GM12878 (cell line): ENCODE measurements at regions of chr1 and their contacts with region 1.

Region 1: GRCh38 chr1:225911191-225912130 is 12.6 kb downstream of the PYCR2 start:
- DNase-seq: no peak
- ATAC-seq: peak; percentile 97
- H3K4me3 ChIP-seq: no peak overlapping the region
- H3K27ac ChIP-seq: no peak overlapping the region
- H3K4me1 ChIP-seq: peaks cover 4% of the 10 kb centered on the region; the same call in 1 of the 2 replicates
- H3K27me3 ChIP-seq: no peaks in the 10 kb centered on the region
- CTCF ChIP-seq: peak; percentile 78 to 81 (median 78)
- EP300 ChIP-seq: no peak
- POLR2A ChIP-seq: no peak
- RAD21 ChIP-seq: peak; percentile 81

Region 2: GRCh38 chr1:225772323-225772768 is 139.1 kb before region 1 on chr1:
- CTCF ChIA-PET with region 1: interaction called, 19 read pairs
- POLR2A ChIA-PET with region 1: no interaction called
- RAD21 ChIA-PET with region 1: interaction called, 39 read pairs
- SMC1A ChIA-PET with region 1: interaction called, 11 read pairs
- in situ Hi-C with region 1: loop called (anchors 5 kb)
- intact Hi-C with region 1: no loop called
- DNase-seq: no peak
- ATAC-seq: peak; percentile 89
- H3K4me3 ChIP-seq: no peak overlapping the region
- H3K27ac ChIP-seq: no peak overlapping the region
- H3K4me1 ChIP-seq: no peaks in the 10 kb centered on the region
- H3K27me3 ChIP-seq: no peaks in the 10 kb centered on the region
- CTCF ChIP-seq: peak; percentile 57 to 63 (median 62); a peak in 5 of 6 replicates
- EP300 ChIP-seq: no peak
- POLR2A ChIP-seq: no peak
- RAD21 ChIP-seq: peak; percentile 62

Region 3: GRCh38 chr1:225851805-225852204 is 59.7 kb before region 1 on chr1:
- CTCF ChIA-PET with region 1: interaction called, 4 read pairs
- POLR2A ChIA-PET with region 1: no interaction called
- RAD21 ChIA-PET with region 1: no interaction called
- SMC1A ChIA-PET with region 1: no interaction called
- in situ Hi-C with region 1: no loop called
- intact Hi-C with region 1: loop called (anchors 5 kb)
- DNase-seq: peak; percentile 76
- ATAC-seq: peak; percentile 83
- H3K4me3 ChIP-seq: no peak overlapping the region
- H3K27ac ChIP-seq: peak overlapping the region; percentile 72
- H3K4me1 ChIP-seq: peaks cover 58% of the 10 kb centered on the region
- H3K27me3 ChIP-seq: no peaks in the 10 kb centered on the region
- CTCF ChIP-seq: no peak
- EP300 ChIP-seq: peak; percentile 58 to 69
- POLR2A ChIP-seq: no peak
- RAD21 ChIP-seq: no peak

Region 4: GRCh38 chr1:225896937-225897549 is 14.4 kb before region 1 on chr1:
- CTCF ChIA-PET with region 1: interaction called, 4 read pairs
- POLR2A ChIA-PET with region 1: no interaction called
- RAD21 ChIA-PET with region 1: interaction called, 13 read pairs
- SMC1A ChIA-PET with region 1: interaction called, 3 read pairs
- in situ Hi-C with region 1: no loop called
- intact Hi-C with region 1: no loop called
- DNase-seq: peak; percentile 90
- ATAC-seq: peak; percentile 100
- H3K4me3 ChIP-seq: no peak overlapping the region
- H3K27ac ChIP-seq: peak overlapping the region; percentile 80
- H3K4me1 ChIP-seq: peaks cover 20% of the 10 kb centered on the region
- H3K27me3 ChIP-seq: no peaks in the 10 kb centered on the region
- CTCF ChIP-seq: peak in 1 of 3 experiments; percentile 11; a peak in 1 of 6 replicates
- EP300 ChIP-seq: peak; percentile 51 to 61; a peak in 3 of 4 replicates
- POLR2A ChIP-seq: peak; percentile 69
- RAD21 ChIP-seq: no peak

Region 5: DNA sequence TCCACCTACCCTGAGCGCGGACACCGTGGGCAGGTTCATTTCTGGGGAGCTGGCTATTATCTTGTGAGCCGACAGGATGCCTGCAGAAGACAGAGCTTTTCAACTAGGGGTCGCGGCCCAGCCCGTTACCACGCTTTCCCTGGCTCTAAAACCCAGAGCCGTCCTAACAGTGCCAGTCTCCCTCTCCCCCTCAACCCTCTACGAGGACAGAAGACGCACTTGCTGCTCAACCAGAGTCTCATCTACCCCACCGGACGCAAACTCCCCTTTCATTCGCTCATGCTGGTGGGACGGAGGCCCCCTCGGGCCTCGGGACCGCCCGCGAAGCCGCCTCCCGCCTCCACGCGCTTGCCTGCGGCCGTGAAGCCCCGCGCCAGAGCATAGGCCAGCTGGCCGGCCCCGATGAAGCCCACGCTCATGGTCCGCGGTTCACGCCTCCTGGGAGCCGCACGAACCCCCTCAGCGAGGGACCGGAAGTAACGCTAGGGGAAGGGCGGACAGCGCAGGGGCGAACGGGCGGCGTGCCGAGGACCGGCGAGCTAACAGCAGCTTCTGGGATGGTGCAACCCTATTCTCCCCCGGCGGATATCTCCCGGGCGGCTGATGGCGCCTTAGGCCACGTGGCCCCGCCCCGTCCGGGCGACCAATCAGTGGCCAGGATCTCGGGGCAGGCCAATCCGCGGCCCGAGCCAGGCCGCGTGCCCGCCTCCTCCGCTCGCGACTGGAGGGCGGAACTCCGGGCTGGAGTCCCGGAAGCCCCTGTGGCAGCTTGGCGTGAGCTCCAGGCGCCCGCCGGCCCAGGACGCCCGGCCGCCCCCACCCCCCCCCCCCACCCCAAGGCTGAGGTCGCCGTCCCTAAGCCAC is 12.5 kb after region 1 on chr1 and contains the start of gene PYCR2:
- CTCF ChIA-PET with region 1: interaction called, 10 read pairs
- POLR2A ChIA-PET with region 1: no interaction called
- RAD21 ChIA-PET with region 1: interaction called, 5 read pairs
- SMC1A ChIA-PET with region 1: no interaction called
- in situ Hi-C with region 1: no loop called
- intact Hi-C with region 1: no loop called
- DNase-seq: peak; percentile 79
- ATAC-seq: peak; percentile 98
- H3K4me3 ChIP-seq: peak within 1 kb of the TSS; percentile 94
- H3K27ac ChIP-seq: peak within 1 kb of the TSS; percentile 96
- H3K4me1 ChIP-seq: peaks cover 7% of the 10 kb centered on the region
- H3K27me3 ChIP-seq: no peaks in the 10 kb centered on the region
- CTCF ChIP-seq: no peak
- EP300 ChIP-seq: no peak
- POLR2A ChIP-seq: peak; percentile 96
- RAD21 ChIP-seq: no peak
- polyA plus RNA-seq, gene PYCR2: 1.7 to 5.9 TPM

Region 6: GRCh38 chr1:225942574-225942973 is 31.1 kb after region 1 on chr1:
- CTCF ChIA-PET with region 1: no interaction called
- POLR2A ChIA-PET with region 1: no interaction called
- RAD21 ChIA-PET with region 1: no interaction called
- SMC1A ChIA-PET with region 1: no interaction called
- in situ Hi-C with region 1: no loop called
- intact Hi-C with region 1: no loop called
- DNase-seq: peak; percentile 39
- ATAC-seq: peak; percentile 81
- H3K4me3 ChIP-seq: no peak overlapping the region
- H3K27ac ChIP-seq: no peak overlapping the region
- H3K4me1 ChIP-seq: peaks cover 24% of the 10 kb centered on the region
- H3K27me3 ChIP-seq: no peaks in the 10 kb centered on the region; a peak in 1 of 4 replicates
- CTCF ChIP-seq: no peak
- EP300 ChIP-seq: no peak
- POLR2A ChIP-seq: no peak
- RAD21 ChIP-seq: no peak

Region 7: DNA sequence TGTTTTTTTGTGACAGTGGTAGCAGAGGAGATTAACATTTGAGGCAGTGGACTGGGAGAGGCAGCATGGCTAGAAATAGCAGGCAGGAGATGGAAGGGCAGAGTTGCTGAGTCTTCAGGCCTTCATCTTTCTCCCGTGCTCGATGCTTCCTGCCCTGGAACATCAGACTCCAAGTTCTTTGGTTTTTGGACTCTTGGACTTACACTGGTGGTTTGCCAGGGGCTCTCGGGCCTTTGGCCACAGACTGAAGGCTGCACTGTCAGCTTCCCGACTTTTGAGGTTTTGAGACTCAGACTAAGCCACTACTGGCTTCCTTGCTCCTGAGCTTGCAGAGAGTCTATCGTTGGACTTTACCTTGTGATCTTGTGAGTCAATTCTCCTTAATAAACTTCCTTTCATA is 53.8 kb after region 1 on chr1:
- CTCF ChIA-PET with region 1: no interaction called
- POLR2A ChIA-PET with region 1: no interaction called
- RAD21 ChIA-PET with region 1: no interaction called
- SMC1A ChIA-PET with region 1: no interaction called
- in situ Hi-C with region 1: no loop called
- intact Hi-C with region 1: no loop called
- DNase-seq: no peak
- ATAC-seq: no peak
- H3K4me3 ChIP-seq: no peak overlapping the region
- H3K27ac ChIP-seq: no peak overlapping the region
- H3K4me1 ChIP-seq: no peaks in the 10 kb centered on the region
- H3K27me3 ChIP-seq: no peaks in the 10 kb centered on the region; a peak in 1 of 4 replicates
- CTCF ChIP-seq: no peak
- EP300 ChIP-seq: no peak
- POLR2A ChIP-seq: no peak
- RAD21 ChIP-seq: no peak

Region 8: DNA sequence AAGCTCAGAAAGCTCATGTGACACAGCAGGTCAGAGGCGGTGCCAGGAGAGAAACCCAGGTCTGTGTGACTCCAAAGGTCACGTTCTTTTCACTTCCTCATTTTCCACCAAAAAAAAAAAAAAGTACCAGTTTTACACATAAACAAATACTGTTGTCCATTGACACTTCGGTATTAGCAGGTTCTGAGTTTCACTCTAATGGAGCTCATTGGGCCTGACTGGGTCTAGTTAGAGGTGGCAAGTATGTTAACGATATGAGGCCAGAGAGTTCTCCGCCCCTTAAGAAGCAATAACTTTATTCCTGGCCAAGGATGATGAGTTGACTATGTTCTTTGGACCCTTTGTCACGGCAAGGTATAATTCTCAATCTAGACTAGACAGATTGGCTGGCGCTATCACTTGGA is 117.6 kb after region 1 on chr1:
- CTCF ChIA-PET with region 1: no interaction called
- POLR2A ChIA-PET with region 1: no interaction called
- RAD21 ChIA-PET with region 1: no interaction called
- SMC1A ChIA-PET with region 1: no interaction called
- in situ Hi-C with region 1: no loop called
- intact Hi-C with region 1: no loop called
- DNase-seq: peak; percentile 59
- ATAC-seq: peak; percentile 93
- H3K4me3 ChIP-seq: no peak overlapping the region
- H3K27ac ChIP-seq: peak overlapping the region; percentile 36
- H3K4me1 ChIP-seq: peaks cover 26% of the 10 kb centered on the region
- H3K27me3 ChIP-seq: no peaks in the 10 kb centered on the region
- CTCF ChIP-seq: no peak
- EP300 ChIP-seq: peak; percentile 81 to 83
- POLR2A ChIP-seq: no peak
- RAD21 ChIP-seq: no peak